Activated CD4-positive, alpha-beta memory T cell treated with anti-CD3 and anti-CD28 coated beads for 36 hours (primary cell): ENCODE measurements at regions of chr12 and their contacts with region 1.

Region 1: GRCh38 chr12:121688966-121689365 is 19.5 kb upstream of the MORN3 start:
- DNase-seq: no peak
- H3K4me3 Mint-ChIP-seq: no peak overlapping the region
- H3K27ac Mint-ChIP-seq: no peak overlapping the region
- H3K4me1 Mint-ChIP-seq: peaks cover 6% of the 10 kb centered on the region
- H3K27me3 Mint-ChIP-seq: no peaks in the 10 kb centered on the region

Region 2: DNA sequence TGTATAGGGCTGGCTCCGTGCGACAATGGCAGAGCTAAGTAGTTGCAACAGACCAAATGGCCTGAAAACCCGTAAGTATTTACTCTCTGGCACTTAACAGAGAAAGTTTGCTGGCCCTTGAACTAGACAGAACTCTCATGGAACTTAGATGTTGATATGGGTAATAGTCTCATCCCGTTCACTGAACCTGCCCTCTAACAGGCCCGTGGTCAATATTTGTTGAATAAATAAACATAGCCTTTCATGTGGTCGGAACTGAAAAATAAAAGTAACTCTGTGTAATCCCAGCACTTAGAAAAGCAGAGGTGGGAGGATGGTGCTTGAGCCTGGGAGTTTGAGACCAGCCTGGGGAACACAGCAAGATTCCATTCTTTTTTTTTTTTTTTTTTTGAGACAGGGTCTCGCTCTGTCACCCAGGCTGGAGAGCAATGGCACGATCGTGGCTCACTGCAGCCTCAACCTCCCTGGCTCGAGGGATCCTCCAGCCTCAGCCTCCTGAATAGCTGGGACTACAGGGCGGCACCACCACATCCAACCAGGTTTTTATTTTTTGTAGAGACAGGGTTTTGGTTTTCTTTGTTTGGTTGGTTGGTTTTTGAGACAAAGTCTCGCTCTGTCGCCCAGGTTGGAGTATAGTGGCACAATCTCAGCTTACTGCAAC is 137.9 kb before region 1 on chr12:
- CTCF ChIA-PET with region 1: interaction called, 12 read pairs
- POLR2A ChIA-PET with region 1: no interaction called
- intact Hi-C with region 1: loop called (anchors 5 kb)
- DNase-seq: no peak
- H3K4me3 Mint-ChIP-seq: no peak overlapping the region
- H3K27ac Mint-ChIP-seq: no peak overlapping the region
- H3K4me1 Mint-ChIP-seq: peaks cover 5% of the 10 kb centered on the region
- H3K27me3 Mint-ChIP-seq: no peaks in the 10 kb centered on the region

Region 3: DNA sequence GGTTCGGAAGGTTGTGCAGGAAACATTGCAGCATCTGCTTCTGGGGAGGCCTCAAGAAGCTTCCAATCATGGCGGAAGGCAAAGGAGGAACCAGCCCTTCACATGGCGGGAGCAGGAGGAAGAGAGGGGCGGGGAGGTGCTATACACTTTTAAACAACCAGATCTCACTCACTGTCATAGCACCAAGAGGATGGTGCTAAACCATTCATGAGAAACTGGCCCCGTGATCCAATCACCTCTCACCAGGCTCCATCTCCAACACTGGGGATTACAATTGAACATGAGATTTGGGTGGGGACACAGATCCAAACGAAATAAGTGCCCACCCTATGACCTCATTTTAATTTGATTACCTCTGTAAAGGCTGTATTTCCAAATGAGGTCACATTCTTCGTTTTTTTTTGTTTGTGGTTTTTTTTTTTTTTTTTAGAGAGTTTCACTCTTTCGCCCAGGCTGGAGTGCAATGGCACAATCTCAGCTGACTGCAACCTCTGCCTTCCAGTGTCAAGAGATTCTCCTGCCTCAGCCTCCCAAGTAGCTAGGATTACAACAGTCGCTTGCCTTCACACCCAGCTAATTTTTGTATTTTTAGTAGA is 74.0 kb before region 1 on chr12:
- CTCF ChIA-PET with region 1: no interaction called
- POLR2A ChIA-PET with region 1: no interaction called
- intact Hi-C with region 1: no loop called
- DNase-seq: no peak
- H3K4me3 Mint-ChIP-seq: no peak overlapping the region
- H3K27ac Mint-ChIP-seq: no peak overlapping the region
- H3K4me1 Mint-ChIP-seq: peaks cover 4% of the 10 kb centered on the region
- H3K27me3 Mint-ChIP-seq: no peaks in the 10 kb centered on the region

Region 4: DNA sequence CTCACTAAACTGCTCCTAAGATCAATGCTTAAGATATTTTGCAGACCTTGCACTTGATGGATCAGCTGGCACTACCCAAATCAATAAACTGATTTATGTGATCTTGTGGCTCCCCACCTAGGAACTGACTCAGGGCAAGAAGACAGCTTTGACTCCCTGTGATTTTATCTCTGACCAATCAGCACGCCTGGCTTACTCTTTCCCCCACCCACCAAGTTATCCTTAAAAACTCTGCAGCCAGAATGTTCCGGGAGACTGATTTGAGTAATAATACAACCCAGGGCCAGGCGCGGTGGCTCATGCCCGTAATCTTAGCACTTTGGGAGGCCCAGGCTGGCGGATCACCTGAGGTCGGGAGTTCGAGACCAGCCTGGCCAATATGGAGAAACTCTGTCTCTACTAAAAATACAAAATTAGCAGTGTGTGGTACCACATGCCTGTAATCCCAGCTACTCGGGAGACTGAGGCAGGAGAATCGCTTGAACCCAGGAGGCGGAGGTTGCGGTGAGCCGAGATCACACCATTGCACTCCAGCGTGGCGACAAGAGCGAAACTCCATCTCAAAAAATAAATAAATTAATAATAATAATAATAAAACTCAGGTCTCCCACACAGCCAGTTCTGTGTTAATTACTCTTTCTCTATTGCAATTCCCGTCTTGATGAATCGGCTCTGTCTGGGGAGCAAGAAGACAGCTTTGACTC is 31.5 kb before region 1 on chr12:
- CTCF ChIA-PET with region 1: no interaction called
- POLR2A ChIA-PET with region 1: no interaction called
- intact Hi-C with region 1: loop called (anchors 2 kb)
- DNase-seq: peak; percentile 79
- H3K4me3 Mint-ChIP-seq: no peak overlapping the region
- H3K27ac Mint-ChIP-seq: peak overlapping the region; percentile 98
- H3K4me1 Mint-ChIP-seq: peaks cover 52% of the 10 kb centered on the region
- H3K27me3 Mint-ChIP-seq: no peaks in the 10 kb centered on the region

Region 5: DNA sequence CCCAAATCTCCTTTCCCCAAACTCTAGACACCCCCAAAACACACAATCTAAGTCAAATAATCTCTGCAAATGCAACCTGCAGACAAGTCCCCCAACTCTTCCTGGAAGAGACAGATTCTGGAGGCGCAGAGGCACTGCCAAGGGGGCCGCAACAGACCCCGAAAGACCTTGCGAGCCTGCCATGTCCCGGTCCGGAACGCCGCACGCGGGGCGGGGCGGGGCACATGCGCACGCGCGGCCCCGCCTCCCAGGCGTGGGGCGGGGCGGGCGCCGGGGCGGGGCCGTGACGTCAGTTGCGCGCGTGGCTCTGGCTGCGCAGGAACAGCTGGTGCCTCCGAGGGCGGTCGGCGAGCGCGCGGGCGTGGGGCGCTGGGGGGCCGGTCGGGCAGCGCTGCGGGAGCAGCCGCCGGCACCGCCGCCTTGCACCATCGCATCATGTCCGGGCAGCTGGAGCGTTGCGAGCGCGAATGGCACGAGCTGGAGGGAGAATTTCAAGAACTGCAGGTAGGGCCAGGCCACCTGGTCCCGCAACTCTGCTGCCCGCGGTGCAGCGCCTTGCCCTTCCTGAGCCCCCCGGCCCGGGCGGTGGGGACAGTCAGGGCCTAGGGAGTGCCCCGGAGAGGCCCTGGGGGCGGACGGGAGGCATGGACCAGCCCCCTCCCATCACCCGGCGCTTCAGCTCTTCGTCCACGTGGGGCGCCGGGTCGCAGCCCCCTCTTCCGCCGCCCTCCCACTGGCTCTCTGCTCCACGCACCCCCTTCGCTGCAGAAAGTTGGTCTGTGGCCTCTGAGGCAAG is 23.7 kb after region 1 on chr12 and contains the start of gene TMEM120B:
- CTCF ChIA-PET with region 1: interaction called, 4 read pairs
- POLR2A ChIA-PET with region 1: no interaction called
- intact Hi-C with region 1: loop called (anchors 2 kb)
- DNase-seq: peak; percentile 86
- H3K4me3 Mint-ChIP-seq: peak within 1 kb of the TSS; percentile 89
- H3K27ac Mint-ChIP-seq: peak within 1 kb of the TSS; percentile 59
- H3K4me1 Mint-ChIP-seq: peaks cover 16% of the 10 kb centered on the region
- H3K27me3 Mint-ChIP-seq: no peaks in the 10 kb centered on the region
- total RNA-seq, gene TMEM120B: 8.8 to 9.5 TPM

Region 6: DNA sequence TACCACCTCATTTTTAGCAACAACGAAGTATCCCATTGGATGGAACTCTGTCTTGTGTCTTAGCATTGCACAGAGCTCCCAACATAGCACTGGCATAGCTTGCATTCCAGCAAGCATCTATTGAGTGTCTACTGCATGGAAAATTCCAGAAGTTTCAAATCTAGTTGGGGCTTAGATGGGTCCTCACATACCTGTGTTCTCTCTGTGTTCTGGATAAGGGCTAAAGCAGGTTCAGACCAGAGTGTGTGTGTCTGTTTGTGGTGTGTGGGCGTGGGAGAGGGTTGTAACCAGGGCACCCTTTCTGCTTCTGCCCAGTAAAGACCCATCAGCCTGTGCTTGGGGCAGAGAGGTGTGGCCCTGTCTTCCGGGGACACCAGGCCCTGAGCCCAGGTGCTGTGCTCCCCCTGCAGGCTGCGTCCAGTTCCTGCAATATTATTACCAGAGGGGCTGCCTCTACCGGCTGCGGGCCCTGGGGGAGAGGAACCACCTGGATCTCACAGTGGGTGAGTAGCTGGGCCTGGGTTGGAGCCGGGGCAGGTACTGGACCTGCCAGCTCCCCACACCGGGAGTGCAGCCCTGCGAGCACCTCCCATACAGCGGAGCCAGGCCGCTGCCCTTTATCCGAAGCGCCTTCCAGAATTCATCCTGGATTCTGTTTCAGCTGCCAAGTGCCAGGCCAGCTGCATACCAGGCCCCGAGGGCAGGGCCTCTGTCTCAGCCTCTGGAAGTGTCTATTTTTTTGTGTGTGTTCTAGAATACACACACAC is 84.2 kb after region 1 on chr12:
- CTCF ChIA-PET with region 1: interaction called, 21 read pairs
- POLR2A ChIA-PET with region 1: no interaction called
- intact Hi-C with region 1: no loop called
- DNase-seq: peak; percentile 87
- H3K4me3 Mint-ChIP-seq: no peak overlapping the region
- H3K27ac Mint-ChIP-seq: peak overlapping the region; percentile 54
- H3K4me1 Mint-ChIP-seq: peaks cover 8% of the 10 kb centered on the region
- H3K27me3 Mint-ChIP-seq: no peaks in the 10 kb centered on the region

Region 7: DNA sequence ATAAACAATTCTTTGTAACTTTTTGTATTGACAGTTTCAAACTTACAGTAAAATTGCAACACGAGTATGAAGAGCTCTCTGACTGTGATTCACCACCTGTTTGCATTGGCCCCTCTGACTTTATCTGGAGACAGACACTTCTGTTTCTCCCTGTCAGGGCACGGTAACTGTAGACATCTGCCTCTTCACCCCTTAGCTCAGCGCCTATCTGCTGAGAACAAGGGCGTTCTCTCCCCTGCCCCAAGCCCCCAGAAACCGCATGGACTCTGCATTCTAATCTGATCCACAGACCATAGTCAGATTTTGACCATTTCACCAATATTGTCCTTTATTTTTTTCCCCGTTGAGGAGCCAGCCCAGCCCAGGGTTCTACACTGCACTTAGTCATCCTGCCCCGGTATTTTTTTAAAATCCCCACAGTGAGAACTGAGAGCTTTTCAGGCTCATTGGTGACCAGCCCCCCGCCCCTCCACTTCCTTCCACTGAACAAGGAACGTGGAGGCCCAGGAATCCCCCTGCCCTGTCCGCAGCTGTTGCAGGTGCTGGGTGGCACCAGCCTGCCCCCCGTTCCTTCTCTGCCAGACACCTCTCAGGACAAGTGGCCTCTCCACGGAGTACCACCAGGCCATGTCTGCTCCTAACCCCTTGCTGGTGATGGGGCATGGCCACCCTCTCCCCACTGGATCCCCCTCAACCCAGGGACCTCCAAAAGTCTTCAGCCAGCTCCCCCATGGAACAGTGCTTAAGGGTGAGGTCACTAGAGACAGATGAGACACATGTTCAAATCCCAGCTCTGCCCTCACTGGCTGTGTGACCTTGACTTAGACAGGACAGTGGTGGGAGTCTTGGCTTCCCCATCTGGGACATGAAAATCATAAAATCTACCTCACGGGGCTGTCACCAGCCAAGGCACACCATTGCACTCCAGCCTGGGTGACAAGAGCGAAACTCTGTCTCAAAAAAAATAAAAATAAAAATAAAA is 93.3 kb after region 1 on chr12:
- CTCF ChIA-PET with region 1: interaction called, 4 read pairs
- POLR2A ChIA-PET with region 1: interaction called, 3 read pairs
- intact Hi-C with region 1: loop called (anchors 2 kb)
- DNase-seq: peak; percentile 88
- H3K4me3 Mint-ChIP-seq: peak overlapping the region; percentile 68
- H3K27ac Mint-ChIP-seq: peak overlapping the region; percentile 96
- H3K4me1 Mint-ChIP-seq: peaks cover 70% of the 10 kb centered on the region
- H3K27me3 Mint-ChIP-seq: no peaks in the 10 kb centered on the region